Panc1 (cell line): ENCODE measurements at regions of chr11 and their contacts with region 1.

Region 1: DNA sequence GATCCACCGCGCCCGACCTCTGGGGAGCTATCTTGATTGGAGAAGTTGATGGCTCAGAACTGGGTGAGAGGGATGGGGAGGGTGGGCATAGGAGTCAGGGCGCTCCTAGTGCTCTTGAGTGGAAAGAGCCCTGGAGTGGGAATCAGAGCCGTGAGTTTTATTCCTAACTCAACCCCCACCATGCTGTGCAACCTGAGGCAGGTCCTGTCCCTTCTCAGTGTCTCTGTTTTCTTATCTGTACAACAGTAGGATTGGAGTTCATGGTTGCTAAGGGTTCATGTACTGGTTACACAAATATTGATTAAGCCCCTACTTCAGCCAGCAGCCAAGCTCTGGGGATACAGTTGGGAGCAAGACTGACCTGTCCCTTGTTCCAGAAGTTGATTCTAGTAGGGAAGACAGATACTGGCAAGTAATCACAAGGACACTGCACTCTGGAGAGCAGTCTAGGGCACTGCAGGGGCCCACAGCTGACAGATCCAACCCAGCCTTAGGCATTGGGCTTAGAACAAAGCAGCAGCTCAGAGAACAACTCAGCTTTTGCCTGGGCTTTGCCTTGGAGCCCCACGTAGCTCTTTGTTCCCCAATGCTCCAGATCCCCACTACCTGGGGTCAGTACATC is 12.4 kb upstream of the DAGLA start:
- DNase-seq: no peak
- ATAC-seq: 0 out of 2 replicates have a peak, but pooled peaks have one; percentile 50
- H3K4me3 ChIP-seq: no peak overlapping the region
- H3K27ac ChIP-seq: no peak overlapping the region
- H3K4me1 ChIP-seq: no peaks in the 10 kb centered on the region
- H3K27me3 ChIP-seq: no peaks in the 10 kb centered on the region
- CTCF ChIP-seq: no peak

Region 2: GRCh38 chr11:61472282-61472681 is 195.5 kb before region 1 on chr11:
- CTCF ChIA-PET with region 1: no interaction called
- POLR2A ChIA-PET with region 1: no interaction called
- in situ Hi-C with region 1: no loop called
- intact Hi-C with region 1: no loop called
- DNase-seq: no peak
- ATAC-seq: no peak
- H3K4me3 ChIP-seq: no peak overlapping the region
- H3K27ac ChIP-seq: no peak overlapping the region
- H3K4me1 ChIP-seq: no peaks in the 10 kb centered on the region
- H3K27me3 ChIP-seq: no peaks in the 10 kb centered on the region
- CTCF ChIP-seq: no peak

Region 3: DNA sequence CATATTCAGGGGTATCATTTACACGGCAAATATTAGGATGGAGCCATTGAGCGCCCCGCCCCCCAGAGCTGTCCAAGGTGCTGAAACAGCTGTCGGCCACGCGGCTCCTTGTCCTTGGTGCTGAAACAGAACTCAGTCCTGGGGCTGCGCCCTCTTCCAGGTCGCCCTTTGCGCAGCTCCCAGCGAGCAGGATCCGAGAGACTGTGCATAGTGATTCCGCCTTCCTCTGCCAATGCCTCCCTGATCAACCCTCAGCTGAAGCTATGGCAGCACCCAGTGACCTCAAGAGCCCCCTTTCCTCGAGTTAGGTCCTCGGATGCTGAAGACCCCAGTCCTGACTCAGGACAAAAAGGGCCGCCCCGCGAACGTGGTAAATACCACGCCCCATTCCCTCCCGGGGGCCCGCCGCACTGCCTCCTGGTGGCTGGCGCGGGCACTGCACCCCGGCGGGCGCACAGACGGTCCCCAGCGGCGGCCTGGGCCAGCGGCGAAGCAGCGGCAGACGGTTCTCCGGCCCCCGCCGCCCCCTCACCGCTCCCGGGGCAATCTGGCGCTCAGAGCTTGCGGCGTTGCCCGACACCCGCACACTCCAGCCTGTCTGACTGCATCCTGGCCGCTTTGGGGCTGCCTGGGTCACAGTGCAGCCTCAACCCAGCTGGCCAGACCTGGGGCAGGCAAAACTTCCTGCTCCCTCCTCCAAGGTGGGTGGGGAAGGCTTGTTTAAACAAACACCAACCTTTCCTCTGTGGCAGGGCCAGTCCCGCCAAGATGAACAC is 100.3 kb before region 1 on chr11:
- CTCF ChIA-PET with region 1: interaction called, 14 read pairs
- POLR2A ChIA-PET with region 1: no interaction called
- in situ Hi-C with region 1: no loop called
- intact Hi-C with region 1: no loop called
- DNase-seq: no peak
- ATAC-seq: peak; percentile 91
- H3K4me3 ChIP-seq: no peak overlapping the region
- H3K27ac ChIP-seq: no peak overlapping the region
- H3K4me1 ChIP-seq: no peaks in the 10 kb centered on the region
- H3K27me3 ChIP-seq: peaks cover 8% of the 10 kb centered on the region
- CTCF ChIP-seq: peak; percentile 90

Region 4: GRCh38 chr11:61621917-61622585 is 45.7 kb before region 1 on chr11:
- CTCF ChIA-PET with region 1: no interaction called
- POLR2A ChIA-PET with region 1: interaction called, 10 read pairs
- in situ Hi-C with region 1: no loop called
- intact Hi-C with region 1: no loop called
- DNase-seq: no peak
- ATAC-seq: 0 out of 2 replicates have a peak, but pooled peaks have one; percentile 25
- H3K4me3 ChIP-seq: no peak overlapping the region
- H3K27ac ChIP-seq: no peak overlapping the region
- H3K4me1 ChIP-seq: no peaks in the 10 kb centered on the region
- H3K27me3 ChIP-seq: peaks cover 2% of the 10 kb centered on the region; the same call in 1 of the 2 replicates
- CTCF ChIP-seq: no peak